ENCODE measurements at regions of chr15 and their contacts with region 1.

Region 1: DNA sequence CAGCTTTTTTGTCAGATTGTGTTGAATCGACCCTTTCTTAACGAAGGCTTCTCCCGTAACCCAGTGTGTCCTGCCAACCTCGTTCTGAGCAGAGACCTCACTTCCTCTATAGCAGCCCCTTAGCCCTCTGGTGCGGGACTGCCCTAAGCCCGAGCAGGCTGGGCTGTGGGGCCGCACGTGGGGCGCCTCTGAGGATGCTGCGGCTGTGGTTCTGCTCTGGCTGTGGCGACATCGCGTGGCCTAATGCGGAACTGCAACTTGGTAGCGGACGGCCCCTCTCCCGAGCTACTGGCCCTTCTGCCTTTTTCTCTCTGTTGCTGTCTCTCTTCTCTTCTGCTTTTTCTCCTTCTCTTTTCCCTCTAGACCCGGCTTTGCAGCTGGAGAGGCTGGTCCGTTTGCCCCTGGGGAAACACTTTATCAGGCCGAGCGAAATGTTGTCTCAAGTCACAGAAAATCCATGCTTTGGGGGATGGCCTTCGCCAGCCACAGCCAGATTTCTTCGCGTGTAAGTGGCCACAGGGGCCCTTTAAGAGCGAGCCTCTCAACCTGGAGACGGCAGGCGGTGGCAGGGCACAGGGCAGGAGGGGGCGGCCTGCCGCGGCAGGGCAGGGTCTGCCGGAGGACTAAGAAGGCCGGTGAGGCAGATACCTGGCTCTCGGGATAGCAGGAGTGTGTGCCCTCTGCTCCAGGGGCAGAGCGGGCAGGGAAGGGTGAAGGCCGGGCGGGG is 19.4 kb upstream of the KIF23 start:
- DNase-seq: peak; percentile 74 to 93
- ATAC-seq: peak; percentile 81 to 93
- H3K4me3 ChIP-seq: no peak overlapping the region
- H3K27ac ChIP-seq: peak overlapping the region; percentile 24 to 66; a peak in 5 of 6 replicates
- H3K4me1 ChIP-seq: peaks cover 26% of the 10 kb centered on the region
- CTCF ChIP-seq: peak; percentile 90
- EP300 ChIP-seq: no peak
- POLR2A ChIP-seq: no peak
- RAD21 ChIP-seq: peak; percentile 92 to 94

Region 2: DNA sequence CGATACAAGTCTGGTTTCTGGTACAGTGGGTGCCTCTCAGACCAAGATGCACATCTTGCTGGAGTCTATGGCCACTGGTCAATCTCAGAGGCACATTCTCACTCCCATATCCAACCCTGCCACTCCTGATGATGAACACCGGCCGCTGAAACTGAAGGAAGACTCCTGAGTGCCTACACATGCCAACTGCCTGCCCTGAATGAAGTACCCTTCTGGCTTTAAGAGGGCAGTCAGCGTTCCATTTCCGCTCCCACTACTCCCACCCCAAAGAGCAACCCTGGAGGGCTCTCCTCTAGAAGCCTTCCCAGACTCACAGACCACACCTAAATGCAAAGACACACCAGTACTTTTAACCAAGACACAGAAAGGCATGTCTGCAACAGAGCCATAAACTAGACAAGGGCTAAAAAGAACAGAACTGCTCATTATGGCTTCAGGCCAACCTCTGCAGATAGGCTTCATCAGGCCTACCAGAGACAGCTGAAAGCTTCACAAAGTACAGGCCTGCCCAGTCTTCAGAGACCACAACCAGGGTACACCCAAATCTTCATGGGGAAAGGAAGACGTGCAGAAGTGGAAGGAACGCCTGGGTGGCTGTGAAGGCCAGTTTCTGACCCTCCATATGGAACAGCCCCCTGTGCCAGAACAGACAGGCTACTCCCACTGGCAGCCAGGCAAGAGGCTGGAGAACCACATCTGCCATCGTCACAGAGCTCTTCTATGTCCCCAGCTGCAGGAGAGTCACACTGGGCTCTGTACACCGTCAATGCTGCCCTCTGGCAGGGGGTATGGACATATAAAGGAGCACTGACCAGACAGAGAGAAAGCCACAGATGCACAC is 588.3 kb before region 1 on chr15:
- CTCF ChIA-PET with region 1: no interaction called
- POLR2A ChIA-PET with region 1: no interaction called
- DNase-seq: no peak
- ATAC-seq: peak; percentile 40 to 42; a peak in 3 of 6 replicates
- H3K4me3 ChIP-seq: no peak overlapping the region
- H3K27ac ChIP-seq: no peak overlapping the region
- H3K4me1 ChIP-seq: 0 out of 3 replicates have a peak, but pooled peaks cover 6% of the 10 kb centered on the region
- CTCF ChIP-seq: no peak
- EP300 ChIP-seq: no peak
- POLR2A ChIP-seq: no peak
- RAD21 ChIP-seq: no peak

Region 3: GRCh38 chr15:69031013-69032001 is 363.4 kb before region 1 on chr15:
- CTCF ChIA-PET with region 1: interaction called, 28 read pairs
- POLR2A ChIA-PET with region 1: no interaction called
- DNase-seq: peak; percentile 82
- ATAC-seq: peak; percentile 87 to 93
- H3K4me3 ChIP-seq: peak overlapping the region; percentile 47
- H3K27ac ChIP-seq: peak overlapping the region; percentile 57 to 78
- H3K4me1 ChIP-seq: peaks cover 23% of the 10 kb centered on the region
- CTCF ChIP-seq: peak; percentile 90
- EP300 ChIP-seq: no peak
- POLR2A ChIP-seq: 0 out of 2 replicates have a peak, but pooled peaks have one; percentile 6
- RAD21 ChIP-seq: peak; percentile 57 to 69

Region 4: DNA sequence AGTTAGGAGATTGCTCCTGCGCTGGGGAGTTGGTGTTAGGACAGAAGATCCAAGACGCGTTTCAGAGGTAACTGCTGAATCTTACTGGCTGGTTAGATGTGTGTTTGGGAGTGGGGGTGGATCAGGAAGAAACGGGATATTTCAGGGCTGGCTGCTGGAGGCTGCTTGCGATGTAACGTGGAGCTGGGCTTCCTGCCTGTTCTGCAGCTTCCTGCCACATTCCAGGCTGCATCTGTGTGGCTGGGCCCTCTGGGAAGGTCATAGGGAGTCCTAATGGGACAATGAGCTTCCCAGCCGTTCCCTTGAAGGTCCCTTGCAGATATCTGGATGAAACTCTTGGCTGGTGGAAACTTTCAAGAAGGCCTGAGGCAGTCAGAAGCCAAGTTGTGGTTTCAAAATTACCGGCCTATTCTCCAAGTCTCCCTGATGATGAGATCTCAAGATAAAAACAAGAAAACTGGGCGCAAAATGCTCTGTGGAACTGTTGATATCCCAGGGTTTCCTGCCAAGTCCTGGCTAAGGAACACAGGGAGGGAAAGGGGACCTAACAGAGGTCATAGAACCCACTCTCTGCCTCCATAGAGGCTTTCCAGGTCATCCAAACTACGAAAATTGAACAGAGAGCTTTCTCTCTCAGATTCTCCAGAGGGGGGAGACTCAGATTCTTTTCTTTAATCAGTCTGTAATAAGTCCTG is 313.3 kb before region 1 on chr15:
- CTCF ChIA-PET with region 1: interaction called, 10 read pairs
- POLR2A ChIA-PET with region 1: no interaction called
- DNase-seq: no peak
- ATAC-seq: peak in 1 of 2 experiments; percentile 32; a peak in 2 of 6 replicates
- H3K4me3 ChIP-seq: no peak overlapping the region
- H3K27ac ChIP-seq: no peak overlapping the region; a peak in 1 of 6 replicates
- H3K4me1 ChIP-seq: no peaks in the 10 kb centered on the region
- CTCF ChIP-seq: no peak
- EP300 ChIP-seq: no peak
- POLR2A ChIP-seq: no peak
- RAD21 ChIP-seq: no peak

Region 5: GRCh38 chr15:69265347-69265955 is 129.3 kb before region 1 on chr15:
- CTCF ChIA-PET with region 1: interaction called, 35 read pairs
- POLR2A ChIA-PET with region 1: no interaction called
- DNase-seq: peak; percentile 36 to 58
- ATAC-seq: peak in 1 of 2 experiments; percentile 59; a peak in 2 of 6 replicates
- H3K4me3 ChIP-seq: no peak overlapping the region
- H3K27ac ChIP-seq: no peak overlapping the region
- H3K4me1 ChIP-seq: no peaks in the 10 kb centered on the region
- CTCF ChIP-seq: peak; percentile 91
- EP300 ChIP-seq: no peak
- POLR2A ChIP-seq: no peak
- RAD21 ChIP-seq: peak; percentile 82 to 83

Region 6: DNA sequence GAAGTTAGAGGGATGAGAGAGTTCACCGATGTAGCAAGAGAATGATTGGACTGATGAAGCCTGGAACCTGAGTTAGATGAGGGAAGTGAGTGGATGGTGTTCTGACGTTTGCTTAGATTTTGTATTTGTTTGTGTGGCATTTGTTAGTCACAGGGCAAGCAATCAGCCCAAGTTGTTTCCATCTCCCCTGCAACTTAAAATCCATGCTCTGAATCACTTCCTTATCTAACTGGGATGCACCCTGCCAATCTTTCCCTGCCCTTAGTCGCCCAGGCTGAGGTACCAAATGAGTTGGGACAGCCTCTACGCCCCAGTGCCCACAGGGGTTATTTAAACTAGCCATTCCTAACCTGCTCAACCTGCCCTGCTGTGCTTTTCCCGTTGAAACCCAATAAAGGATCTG is 83.4 kb before region 1 on chr15:
- CTCF ChIA-PET with region 1: interaction called, 22 read pairs
- POLR2A ChIA-PET with region 1: no interaction called
- DNase-seq: peak; percentile 67 to 74
- ATAC-seq: peak; percentile 69 to 77
- H3K4me3 ChIP-seq: no peak overlapping the region
- H3K27ac ChIP-seq: peak overlapping the region; percentile 63 to 74
- H3K4me1 ChIP-seq: peaks cover 96% of the 10 kb centered on the region
- CTCF ChIP-seq: no peak
- EP300 ChIP-seq: no peak
- POLR2A ChIP-seq: no peak
- RAD21 ChIP-seq: no peak

Region 7: DNA sequence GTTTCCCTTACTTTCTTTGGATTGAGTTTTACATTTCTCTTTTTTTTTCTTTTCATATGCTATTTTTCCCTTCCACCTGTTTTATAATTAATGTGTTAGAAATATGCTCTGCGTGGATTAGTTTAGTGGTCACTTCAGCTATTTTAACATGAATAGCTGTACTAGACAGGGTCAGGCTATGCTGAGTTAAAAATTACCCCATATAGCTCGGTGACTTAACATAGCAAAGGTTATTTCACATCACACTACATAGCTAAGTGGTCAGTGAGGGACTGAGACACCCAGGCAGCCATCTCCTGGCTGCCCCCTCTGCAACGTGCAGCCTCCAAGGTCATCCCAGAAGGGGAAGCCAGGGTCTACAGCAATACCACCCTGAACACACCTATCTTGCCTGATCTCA is 27.5 kb before region 1 on chr15:
- CTCF ChIA-PET with region 1: interaction called, 20 read pairs
- POLR2A ChIA-PET with region 1: no interaction called
- DNase-seq: no peak
- ATAC-seq: no peak
- H3K4me3 ChIP-seq: no peak overlapping the region
- H3K27ac ChIP-seq: no peak overlapping the region
- H3K4me1 ChIP-seq: peaks cover 10% of the 10 kb centered on the region; the same call in 2 of the 3 replicates
- CTCF ChIP-seq: no peak
- EP300 ChIP-seq: no peak
- POLR2A ChIP-seq: no peak
- RAD21 ChIP-seq: no peak

Region 8: DNA sequence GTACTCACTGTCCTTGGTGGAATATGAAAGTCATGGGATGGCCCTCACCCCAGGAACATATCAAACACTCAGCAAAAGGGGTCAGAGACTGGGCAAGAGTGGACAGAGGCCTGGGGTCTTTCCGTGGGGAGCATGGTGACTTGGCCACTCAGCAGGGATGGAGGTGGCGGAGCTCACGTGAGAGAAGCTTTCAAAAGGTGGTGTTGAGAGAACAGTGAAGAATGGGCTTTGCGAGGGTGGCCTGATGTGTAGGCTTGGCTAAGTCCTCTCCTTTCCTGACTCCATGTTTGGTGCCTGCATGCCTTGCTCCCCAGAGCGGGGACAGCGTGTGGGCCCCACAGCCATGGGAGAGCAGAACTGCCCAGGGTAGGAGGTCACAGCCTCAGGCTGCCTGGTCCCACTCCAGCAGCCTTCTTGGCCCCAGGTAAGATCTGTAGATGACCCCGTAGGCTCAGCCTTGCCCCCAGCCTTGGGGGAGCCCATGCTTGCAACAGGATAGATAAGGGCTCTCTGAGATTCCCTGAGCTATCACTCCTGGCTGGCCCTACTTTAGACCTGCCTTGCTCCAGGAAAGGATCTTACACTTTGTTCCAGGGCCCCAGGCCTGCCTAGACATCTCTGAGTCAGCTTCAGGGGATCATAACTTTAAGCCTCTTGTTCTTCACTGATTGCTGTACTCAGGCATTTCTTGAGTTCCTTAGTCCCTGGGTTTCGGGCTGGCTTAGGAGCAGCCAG is 74.9 kb after region 1 on chr15:
- CTCF ChIA-PET with region 1: no interaction called
- POLR2A ChIA-PET with region 1: no interaction called
- DNase-seq: no peak
- ATAC-seq: no peak
- H3K4me3 ChIP-seq: no peak overlapping the region
- H3K27ac ChIP-seq: no peak overlapping the region
- H3K4me1 ChIP-seq: peaks cover 25% of the 10 kb centered on the region
- CTCF ChIP-seq: no peak
- EP300 ChIP-seq: no peak
- POLR2A ChIP-seq: no peak
- RAD21 ChIP-seq: no peak

Region 9: DNA sequence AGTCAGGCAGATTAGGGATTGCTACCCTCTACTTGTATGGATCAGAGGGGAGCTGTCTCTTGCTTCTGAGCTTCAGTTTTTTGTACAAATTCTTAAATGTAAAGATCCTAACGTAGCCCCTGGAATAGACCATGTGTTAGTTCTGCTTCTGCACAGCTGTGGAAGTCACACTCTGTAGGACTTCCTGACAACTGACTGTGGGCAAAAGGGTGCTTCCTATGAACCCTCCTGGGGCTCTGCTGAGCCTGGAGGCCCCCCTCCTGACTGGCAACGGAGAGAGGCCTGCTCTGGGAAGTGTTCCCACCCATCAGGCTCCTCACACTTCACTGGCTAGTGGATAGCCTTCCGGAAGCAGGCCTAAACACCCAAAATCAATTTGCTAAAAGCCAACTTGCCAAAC is 188.9 kb after region 1 on chr15:
- CTCF ChIA-PET with region 1: no interaction called
- POLR2A ChIA-PET with region 1: no interaction called
- DNase-seq: no peak
- ATAC-seq: no peak
- H3K4me3 ChIP-seq: no peak overlapping the region
- H3K27ac ChIP-seq: no peak overlapping the region
- H3K4me1 ChIP-seq: peaks cover 14% of the 10 kb centered on the region; the same call in 2 of the 3 replicates
- CTCF ChIP-seq: no peak
- EP300 ChIP-seq: no peak
- POLR2A ChIP-seq: no peak
- RAD21 ChIP-seq: no peak